Left colon (tissue), 2 donors: ENCODE measurements at regions of chr20 and their contacts with region 1.

Region 1: GRCh38 chr20:25623736-25624499 is at the start of gene NANP:
- DNase-seq: peak; percentile 96 to 97
- ATAC-seq: peak; percentile 89
- total RNA-seq, gene NANP: 2.7 to 3.7 TPM

Region 2: GRCh38 chr20:25563876-25564275 is 60.0 kb before region 1 on chr20:
- intact Hi-C with region 1: no loop called
- DNase-seq: no peak
- ATAC-seq: no peak

Region 3: DNA sequence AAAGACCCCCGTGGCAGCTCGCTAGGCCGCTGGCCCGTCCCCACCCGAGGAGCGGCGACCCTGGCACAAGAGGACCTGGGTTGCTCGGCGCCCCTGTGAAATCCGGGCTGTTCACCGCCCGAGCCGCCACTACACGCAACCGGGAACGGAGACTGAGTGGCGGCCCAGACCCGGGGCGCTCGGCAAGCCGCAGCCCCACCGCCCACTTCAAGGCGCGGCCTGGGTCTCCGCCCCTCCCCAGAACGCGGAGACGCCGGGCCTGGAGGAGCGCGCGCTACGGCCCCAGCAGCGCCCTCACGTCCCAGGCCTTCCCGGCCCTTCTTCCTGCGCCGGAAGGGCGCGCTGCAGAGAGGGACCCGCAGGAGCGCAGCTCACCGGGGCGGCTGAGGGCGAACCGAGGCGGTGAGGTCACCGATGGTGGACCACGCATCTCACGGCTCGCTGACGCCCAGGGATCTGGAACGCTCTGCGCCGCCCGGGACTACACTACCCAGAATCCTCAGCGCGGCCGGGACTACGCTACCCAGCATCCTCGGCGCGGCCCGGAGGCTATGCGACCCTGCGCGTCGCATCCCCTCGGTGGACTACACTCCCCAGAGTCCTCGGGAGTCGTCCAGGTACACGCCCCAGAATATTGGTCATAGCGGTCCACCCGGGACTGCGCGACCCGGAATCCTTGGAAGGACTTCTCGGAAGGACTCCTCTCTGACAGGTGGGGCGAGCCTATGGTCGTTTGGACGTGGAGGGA is 72.6 kb after region 1 on chr20 and contains the start of gene ZNF337:
- intact Hi-C with region 1: loop called in 1 of 2 experiments (anchors 10 kb)
- DNase-seq: peak; percentile 93 to 97
- ATAC-seq: peak; percentile 99
- total RNA-seq, gene ZNF337: 8.0 to 8.3 TPM

Region 4: GRCh38 chr20:25706793-25707192 is 82.9 kb after region 1 on chr20:
- intact Hi-C with region 1: no loop called
- DNase-seq: no peak
- ATAC-seq: no peak